A673 (cell line): ENCODE measurements at regions of chr7 and their contacts with region 1.

Region 1: DNA sequence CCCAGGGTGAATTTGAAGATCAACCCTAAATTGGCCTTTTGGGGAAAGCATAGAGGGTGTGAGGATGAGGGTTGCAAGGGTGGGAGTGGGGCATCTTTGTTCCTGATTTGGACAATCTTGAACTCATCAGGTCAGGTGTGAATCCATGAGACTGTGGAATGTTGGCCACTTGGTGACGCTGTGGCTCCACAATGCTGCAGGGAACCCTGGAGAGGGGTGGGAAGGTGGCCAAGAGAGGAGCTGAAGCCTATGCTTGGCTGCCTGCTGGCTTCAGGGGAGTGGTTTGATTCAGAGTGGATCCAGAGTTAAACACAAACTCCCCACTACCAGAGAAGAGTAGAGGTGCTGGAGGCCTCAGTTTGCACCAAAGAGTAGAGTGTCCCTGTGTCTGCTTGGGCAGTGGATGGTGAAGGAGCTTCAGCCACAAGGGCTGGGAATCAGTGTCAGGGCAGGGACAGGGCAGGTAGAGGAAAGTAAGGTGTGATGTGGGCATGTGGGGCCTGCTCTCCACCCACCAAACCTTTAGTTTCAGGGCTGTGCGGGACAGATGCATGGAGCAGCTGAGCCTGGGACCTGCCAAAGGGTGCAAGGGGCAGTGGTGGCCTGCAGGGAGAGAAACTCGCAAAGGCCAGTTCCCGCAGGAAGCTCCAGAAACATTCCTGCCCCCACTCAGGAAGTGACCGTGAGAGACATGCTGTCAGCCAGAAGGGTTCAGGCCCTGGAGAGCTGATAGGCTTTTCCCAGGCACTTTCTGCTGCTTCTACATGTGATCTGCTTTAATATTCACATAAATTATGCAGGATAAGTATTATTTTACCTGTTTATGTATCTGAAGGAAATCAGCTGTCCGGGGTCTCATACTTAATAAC is 81.0 kb upstream of the PRSS58 start:
- DNase-seq: peak; percentile 80
- H3K4me3 ChIP-seq: no peak overlapping the region
- H3K27ac ChIP-seq: no peak overlapping the region
- H3K4me1 ChIP-seq: peaks cover 4% of the 10 kb centered on the region
- H3K27me3 ChIP-seq: peaks cover 15% of the 10 kb centered on the region
- CTCF ChIP-seq: peak; percentile 82

Region 2: GRCh38 chr7:142308918-142309317 is 29.9 kb before region 1 on chr7:
- CTCF ChIA-PET with region 1: no interaction called
- POLR2A ChIA-PET with region 1: no interaction called
- intact Hi-C with region 1: loop called (anchors 1 kb)
- DNase-seq: no peak
- H3K4me3 ChIP-seq: no peak overlapping the region
- H3K27ac ChIP-seq: no peak overlapping the region
- H3K4me1 ChIP-seq: no peaks in the 10 kb centered on the region
- H3K27me3 ChIP-seq: peaks cover 25% of the 10 kb centered on the region
- CTCF ChIP-seq: no peak

Region 3: DNA sequence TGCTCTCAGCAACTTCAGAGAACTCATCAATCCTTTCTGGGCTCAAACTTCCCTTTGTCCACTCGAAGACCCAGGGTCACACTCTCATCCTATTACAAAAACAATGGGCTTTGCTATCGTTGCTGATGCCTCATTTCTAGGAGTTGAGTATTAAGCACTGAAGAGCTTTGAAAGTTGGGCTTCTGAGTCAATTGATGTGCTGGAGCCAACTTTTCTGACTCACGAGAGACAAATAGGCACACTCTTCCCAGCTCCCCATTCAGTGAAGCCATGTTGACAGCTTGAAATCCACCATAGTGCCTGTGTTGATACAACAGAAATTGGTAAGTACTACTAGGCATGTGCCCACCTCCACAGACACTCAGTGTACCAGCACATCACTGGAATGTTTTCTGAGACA is 16.5 kb after region 1 on chr7:
- CTCF ChIA-PET with region 1: interaction called, 3 read pairs
- POLR2A ChIA-PET with region 1: no interaction called
- intact Hi-C with region 1: loop called (anchors 1 kb)
- DNase-seq: no peak
- H3K4me3 ChIP-seq: no peak overlapping the region
- H3K27ac ChIP-seq: no peak overlapping the region
- H3K4me1 ChIP-seq: no peaks in the 10 kb centered on the region
- H3K27me3 ChIP-seq: peaks cover 20% of the 10 kb centered on the region
- CTCF ChIP-seq: no peak

Region 4: DNA sequence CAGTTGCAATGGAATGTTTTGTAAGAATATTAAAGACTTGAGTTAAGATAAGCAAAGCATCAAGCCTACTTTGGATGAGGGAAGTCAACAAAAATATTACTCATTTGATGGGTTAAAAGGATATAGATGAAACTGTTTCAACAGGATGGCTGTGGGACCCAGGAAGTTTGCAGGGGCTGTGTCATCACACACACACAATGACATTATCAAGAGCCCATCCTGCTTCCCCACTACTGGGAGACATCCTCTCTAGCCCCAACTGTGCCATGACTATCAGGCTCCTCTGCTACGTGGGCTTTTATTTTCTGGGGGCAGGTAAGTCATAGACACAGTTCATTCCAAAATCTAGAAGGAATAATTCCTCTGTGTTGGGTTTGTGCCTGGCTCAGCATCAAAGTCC is 331.6 kb after region 1 on chr7:
- CTCF ChIA-PET with region 1: no interaction called
- POLR2A ChIA-PET with region 1: no interaction called
- intact Hi-C with region 1: no loop called
- DNase-seq: no peak
- H3K4me3 ChIP-seq: no peak overlapping the region
- H3K27ac ChIP-seq: no peak overlapping the region
- H3K4me1 ChIP-seq: no peaks in the 10 kb centered on the region
- H3K27me3 ChIP-seq: no peaks in the 10 kb centered on the region
- CTCF ChIP-seq: no peak

Region 5: GRCh38 chr7:143380255-143380645 is 1041.4 kb after region 1 on chr7:
- CTCF ChIA-PET with region 1: no interaction called
- POLR2A ChIA-PET with region 1: no interaction called
- intact Hi-C with region 1: no loop called
- DNase-seq: peak; percentile 93
- H3K4me3 ChIP-seq: peak overlapping the region; percentile 65
- H3K27ac ChIP-seq: peak overlapping the region; percentile 97
- H3K4me1 ChIP-seq: peaks cover 35% of the 10 kb centered on the region
- H3K27me3 ChIP-seq: no peaks in the 10 kb centered on the region
- CTCF ChIP-seq: peak; percentile 93